HCT116 (cell line): ENCODE measurements at regions of chr16 and their contacts with region 1.

Region 1: DNA sequence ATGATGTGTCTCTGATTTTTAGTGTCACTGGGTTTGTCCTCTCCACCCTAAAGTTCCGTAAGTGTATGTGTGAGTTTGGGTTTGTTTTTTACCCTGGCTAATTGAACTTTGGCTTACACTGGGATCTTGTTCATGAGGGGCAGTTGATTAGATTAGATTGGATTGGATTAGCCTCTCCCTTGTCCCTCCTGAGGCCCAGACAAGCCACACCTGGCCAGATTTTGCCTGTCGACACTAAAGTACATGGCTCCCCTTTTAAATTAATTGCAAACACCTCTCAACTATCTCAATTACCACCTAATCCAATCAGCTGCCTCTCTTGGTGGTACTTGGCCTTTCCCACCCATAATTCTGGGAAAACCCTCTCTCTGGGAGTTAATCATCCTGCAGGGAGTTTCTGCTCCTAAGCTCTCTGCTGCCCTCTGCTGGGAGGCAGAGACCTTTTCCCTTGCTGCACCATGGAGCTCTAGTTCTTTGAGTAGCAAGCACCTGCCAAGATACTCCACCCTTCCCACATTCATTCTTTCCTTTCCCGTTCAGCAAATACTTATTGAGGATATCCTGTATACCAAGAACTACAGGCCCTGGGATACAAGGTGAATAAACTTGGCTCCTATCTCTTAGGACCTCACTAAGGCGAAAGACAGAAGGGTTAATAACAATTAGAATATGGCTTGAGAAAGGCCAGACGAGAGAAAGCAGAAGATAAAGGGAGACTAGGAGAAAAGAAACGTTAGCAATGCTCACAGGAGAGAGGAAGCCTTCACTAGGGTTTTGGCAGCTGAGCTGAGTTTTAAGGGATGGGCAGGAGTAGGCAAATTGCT is 60.0 kb upstream of the MPHOSPH6 start:
- DNase-seq: peak; percentile 70
- ATAC-seq: peak; percentile 97
- H3K4me3 ChIP-seq: no peak overlapping the region
- H3K27ac ChIP-seq: no peak overlapping the region
- H3K4me1 ChIP-seq: no peaks in the 10 kb centered on the region
- H3K27me3 ChIP-seq: peaks cover 56% of the 10 kb centered on the region
- CTCF ChIP-seq: peak; percentile 90 to 99 (median 99)
- POLR2A ChIP-seq: no peak
- RAD21 ChIP-seq: peak; percentile 93

Region 2: DNA sequence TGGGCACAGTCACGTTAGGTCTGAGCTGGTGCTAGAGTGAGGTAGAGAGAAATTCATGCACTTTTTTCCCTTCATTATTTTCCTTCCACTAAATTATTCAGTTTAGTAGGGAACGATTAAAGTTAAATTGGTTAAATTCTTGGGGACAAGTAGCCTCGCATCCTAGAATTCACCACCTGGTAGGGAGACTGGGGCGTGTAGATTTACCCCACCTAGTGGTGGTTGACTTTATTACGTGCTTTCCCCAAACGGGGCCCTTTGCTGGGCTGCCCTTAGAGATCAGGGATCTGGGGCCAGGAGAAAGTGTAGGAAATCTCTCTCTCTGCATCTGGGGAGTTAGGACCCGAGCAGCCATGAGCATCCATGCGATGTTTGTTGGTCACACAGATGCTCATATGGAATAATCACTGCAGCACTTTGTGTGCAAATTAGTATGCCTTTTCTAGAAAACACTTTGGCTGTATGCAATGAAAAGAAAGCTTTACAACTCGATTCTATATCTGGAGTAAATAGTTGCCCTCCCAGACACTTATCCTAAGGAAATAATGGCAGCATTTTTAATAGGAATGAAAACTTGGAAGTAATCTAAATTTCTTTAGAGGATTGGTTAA is 343.9 kb before region 1 on chr16:
- CTCF ChIA-PET with region 1: interaction called, 11 read pairs
- POLR2A ChIA-PET with region 1: no interaction called
- RAD21 ChIA-PET with region 1: no interaction called
- intact Hi-C with region 1: loop called (anchors 1 kb)
- DNase-seq: peak; percentile 40
- ATAC-seq: peak; percentile 89
- H3K4me3 ChIP-seq: no peak overlapping the region
- H3K27ac ChIP-seq: no peak overlapping the region
- H3K4me1 ChIP-seq: no peaks in the 10 kb centered on the region
- H3K27me3 ChIP-seq: no peaks in the 10 kb centered on the region
- CTCF ChIP-seq: peak; percentile 67 to 89 (median 87); a peak in 5 of 6 replicates
- POLR2A ChIP-seq: no peak
- RAD21 ChIP-seq: peak; percentile 68

Region 3: GRCh38 chr16:81940781-81941560 is 289.0 kb before region 1 on chr16:
- CTCF ChIA-PET with region 1: interaction called, 35 read pairs
- POLR2A ChIA-PET with region 1: no interaction called
- RAD21 ChIA-PET with region 1: no interaction called
- intact Hi-C with region 1: loop called (anchors 1 kb)
- DNase-seq: peak; percentile 57
- ATAC-seq: peak; percentile 88
- H3K4me3 ChIP-seq: no peak overlapping the region
- H3K27ac ChIP-seq: no peak overlapping the region
- H3K4me1 ChIP-seq: peaks cover 8 to 11% of the 10 kb centered on the region in 2 experiments; a peak in 3 of 4 replicates
- H3K27me3 ChIP-seq: no peaks in the 10 kb centered on the region
- CTCF ChIP-seq: peak; percentile 59 to 87 (median 81)
- POLR2A ChIP-seq: no peak
- RAD21 ChIP-seq: peak; percentile 83

Region 4: DNA sequence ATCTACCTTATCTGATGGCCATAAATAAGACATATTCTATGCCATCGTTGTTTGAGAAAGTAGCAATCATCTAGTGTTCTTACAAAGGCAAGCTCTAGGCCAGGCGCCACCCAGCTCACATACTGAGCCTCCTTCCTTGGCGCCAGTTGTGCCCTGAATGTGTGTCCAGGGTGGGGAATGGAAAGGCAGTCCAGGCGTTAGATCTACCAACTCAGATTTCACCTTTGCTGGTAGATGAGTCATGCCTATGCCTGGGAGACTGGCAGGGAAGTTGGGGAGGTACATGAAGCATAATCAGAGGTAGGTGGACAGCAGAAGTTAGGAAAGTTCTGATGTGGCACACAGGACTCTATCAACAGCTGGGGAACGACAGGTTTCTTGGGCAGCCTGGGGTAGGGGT is 242.3 kb before region 1 on chr16:
- CTCF ChIA-PET with region 1: no interaction called
- POLR2A ChIA-PET with region 1: no interaction called
- RAD21 ChIA-PET with region 1: no interaction called
- intact Hi-C with region 1: no loop called
- DNase-seq: peak; percentile 57
- ATAC-seq: peak; percentile 93
- H3K4me3 ChIP-seq: 0 out of 4 replicates have a peak overlapping the region, but pooled peaks of 1 of the 2 experiments have one; percentile 1
- H3K27ac ChIP-seq: no peak overlapping the region
- H3K4me1 ChIP-seq: peaks cover 8 to 15% of the 10 kb centered on the region in 2 experiments; a peak in 3 of 4 replicates
- H3K27me3 ChIP-seq: no peaks in the 10 kb centered on the region
- CTCF ChIP-seq: no peak
- POLR2A ChIP-seq: no peak
- RAD21 ChIP-seq: no peak

Region 5: DNA sequence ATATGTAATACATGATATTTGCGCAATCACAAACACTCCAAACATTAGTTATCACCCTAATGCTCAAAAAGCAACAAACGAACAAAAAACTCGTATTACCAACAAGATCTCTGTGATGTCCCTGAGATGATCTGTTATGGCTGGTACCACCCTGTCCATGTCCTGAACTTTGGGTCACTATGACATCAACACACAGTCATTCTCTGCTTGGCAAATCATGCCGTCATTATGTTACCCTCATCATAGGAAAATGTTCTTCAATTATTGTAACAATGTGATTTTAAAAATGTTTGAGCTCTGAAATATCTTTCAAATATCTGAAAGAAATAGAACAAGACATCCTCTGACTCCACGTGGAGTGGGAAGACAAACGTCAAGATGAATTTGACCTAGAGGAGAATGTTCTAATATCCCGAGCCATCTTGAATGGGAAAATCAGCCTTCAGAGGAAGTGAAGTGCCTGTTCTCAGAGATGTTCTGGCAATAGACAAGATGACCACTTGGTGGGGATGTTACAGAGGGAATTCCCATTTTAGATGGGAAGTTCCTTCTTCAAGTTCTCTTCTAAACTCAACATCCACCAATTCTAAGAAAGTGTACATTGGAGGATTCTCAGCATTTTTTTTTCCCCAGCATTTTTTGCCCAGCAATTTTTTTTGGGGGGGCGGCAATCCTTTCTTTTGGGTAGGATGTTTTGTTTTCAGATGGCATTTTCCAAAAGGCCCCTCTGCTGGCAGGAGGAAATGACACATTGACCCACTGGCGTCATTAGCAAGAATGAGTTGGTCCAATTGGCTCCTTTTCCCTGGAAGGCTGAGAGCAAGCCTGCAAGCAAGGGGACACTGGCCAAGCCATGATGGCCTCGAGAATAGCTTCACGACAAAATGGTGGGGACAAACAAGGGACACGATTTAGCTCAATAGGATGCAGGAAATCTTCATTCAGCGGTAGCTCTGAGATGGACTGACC is 198.6 kb before region 1 on chr16:
- CTCF ChIA-PET with region 1: interaction called, 12 read pairs
- POLR2A ChIA-PET with region 1: no interaction called
- RAD21 ChIA-PET with region 1: no interaction called
- intact Hi-C with region 1: loop called (anchors 1 kb)
- DNase-seq: peak; percentile 62
- ATAC-seq: peak; percentile 81
- H3K4me3 ChIP-seq: no peak overlapping the region
- H3K27ac ChIP-seq: no peak overlapping the region
- H3K4me1 ChIP-seq: peaks cover 0 to 15% of the 10 kb centered on the region in 2 experiments; a peak in 2 of 4 replicates
- H3K27me3 ChIP-seq: peaks cover 29% of the 10 kb centered on the region
- CTCF ChIP-seq: peak; percentile 75 to 79 (median 78)
- POLR2A ChIP-seq: no peak
- RAD21 ChIP-seq: peak; percentile 80

Region 6: DNA sequence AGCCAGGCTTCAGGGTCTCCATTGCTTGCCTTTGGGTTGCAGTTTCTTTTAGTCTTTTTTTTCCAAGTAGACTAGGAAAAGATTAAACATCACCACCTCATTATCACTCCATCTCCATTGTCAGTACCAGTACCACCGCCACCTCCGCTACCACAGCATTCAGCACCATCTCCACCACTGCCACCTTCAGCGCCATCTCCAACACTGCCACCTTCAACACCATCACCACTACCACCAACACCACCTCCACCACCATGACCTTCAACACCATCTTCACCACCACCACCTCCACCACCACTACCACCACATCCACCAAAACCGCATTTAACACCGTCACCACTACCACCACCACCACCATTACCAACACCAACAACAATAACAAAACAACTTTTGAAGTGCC is 81.5 kb after region 1 on chr16:
- CTCF ChIA-PET with region 1: no interaction called
- POLR2A ChIA-PET with region 1: no interaction called
- RAD21 ChIA-PET with region 1: no interaction called
- intact Hi-C with region 1: no loop called
- DNase-seq: no peak
- ATAC-seq: no peak
- H3K4me3 ChIP-seq: no peak overlapping the region
- H3K27ac ChIP-seq: no peak overlapping the region
- H3K4me1 ChIP-seq: no peaks in the 10 kb centered on the region
- H3K27me3 ChIP-seq: peaks cover 22% of the 10 kb centered on the region
- CTCF ChIP-seq: no peak
- POLR2A ChIP-seq: no peak
- RAD21 ChIP-seq: no peak

Region 7: GRCh38 chr16:82358568-82359221 is 128.7 kb after region 1 on chr16:
- CTCF ChIA-PET with region 1: no interaction called
- POLR2A ChIA-PET with region 1: no interaction called
- RAD21 ChIA-PET with region 1: no interaction called
- intact Hi-C with region 1: no loop called
- DNase-seq: no peak
- ATAC-seq: no peak
- H3K4me3 ChIP-seq: no peak overlapping the region
- H3K27ac ChIP-seq: no peak overlapping the region
- H3K4me1 ChIP-seq: no peaks in the 10 kb centered on the region
- H3K27me3 ChIP-seq: peaks cover 41% of the 10 kb centered on the region
- CTCF ChIP-seq: no peak
- POLR2A ChIP-seq: no peak
- RAD21 ChIP-seq: no peak